ENCODE measurements at regions of chr1 and their contacts with region 1.

Region 1: DNA sequence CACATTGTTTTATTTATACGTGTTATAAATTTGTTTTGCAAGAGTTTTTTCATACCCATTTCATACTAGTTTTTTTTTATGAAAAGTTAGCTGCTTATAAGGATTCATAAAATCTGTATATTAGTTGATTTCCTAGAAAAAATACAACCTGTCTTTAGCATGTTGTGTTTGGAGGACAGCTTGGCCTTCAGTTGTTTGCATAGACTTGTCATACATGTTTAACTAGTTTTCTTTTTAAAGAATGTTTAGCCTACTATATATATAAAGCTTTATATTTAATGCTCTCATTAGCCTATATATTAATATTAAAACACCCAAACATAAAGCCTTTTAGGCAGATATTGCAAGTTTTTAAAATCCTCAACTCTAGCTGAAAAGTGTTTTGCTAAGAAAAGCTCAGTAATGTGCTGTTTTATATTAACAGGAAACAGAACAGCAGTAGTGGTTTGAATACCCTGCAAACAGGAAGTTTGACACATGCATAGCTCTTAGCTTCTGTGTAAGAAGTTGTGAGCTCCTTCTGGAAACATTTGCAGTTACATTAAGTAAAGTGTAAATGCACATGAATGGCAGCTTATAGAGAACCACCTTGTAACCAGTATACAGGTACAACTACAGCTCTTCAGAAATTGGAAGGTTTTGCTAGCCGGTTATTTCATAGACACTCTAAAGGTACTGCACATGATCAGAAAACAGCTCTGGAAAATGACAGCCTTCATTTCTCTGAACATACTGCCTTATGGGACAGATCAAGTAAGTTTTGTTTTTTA is at the start of gene PRKACB:
- DNase-seq: no peak
- ATAC-seq: peak; percentile 90
- H3K4me3 Mint-ChIP-seq: peak within 1 kb of the TSS; percentile 90
- H3K27ac Mint-ChIP-seq: peak within 1 kb of the TSS; percentile 99
- H3K4me1 Mint-ChIP-seq: peaks cover 31% of the 10 kb centered on the region
- H3K27me3 Mint-ChIP-seq: no peaks in the 10 kb centered on the region
- total RNA-seq, gene PRKACB: 68.8 to 69.1 TPM

Region 2: DNA sequence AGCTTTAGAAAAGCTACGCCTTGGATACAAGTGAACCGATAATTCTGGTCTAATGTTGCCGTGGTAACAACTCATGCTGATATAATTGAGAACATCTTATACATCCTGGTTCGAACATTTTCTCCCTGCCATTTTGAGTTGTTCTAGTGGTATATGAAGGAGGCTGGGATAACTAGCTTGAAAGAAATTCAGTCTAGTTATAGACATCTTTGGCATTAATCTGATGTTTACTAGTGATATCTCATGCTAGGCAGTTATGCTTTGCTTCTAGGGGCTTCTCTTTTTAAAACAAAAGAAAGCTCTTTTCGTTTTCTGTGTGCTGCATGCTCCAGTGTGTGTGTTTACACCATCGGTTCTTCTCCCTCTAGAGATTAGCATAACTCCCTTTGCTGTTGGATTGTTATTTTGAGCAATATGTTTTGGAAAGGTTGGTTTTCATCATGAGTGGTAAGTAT is 20.6 kb after region 1 on chr1:
- CTCF ChIA-PET with region 1: interaction called, 18 read pairs
- DNase-seq: no peak
- ATAC-seq: peak; percentile 43
- H3K4me3 Mint-ChIP-seq: peak overlapping the region; percentile 72
- H3K27ac Mint-ChIP-seq: peak overlapping the region; percentile 83
- H3K4me1 Mint-ChIP-seq: peaks cover 67% of the 10 kb centered on the region
- H3K27me3 Mint-ChIP-seq: no peaks in the 10 kb centered on the region